Common myeloid progenitor, CD34-positive (primary cell): ENCODE measurements at regions of chr3 and their contacts with region 1.

Region 1: GRCh38 chr3:49570028-49570654 is 15.9 kb downstream of the BSN start:
- DNase-seq: no peak
- H3K4me3 ChIP-seq: no peak overlapping the region
- H3K27ac ChIP-seq: no peak overlapping the region
- H3K4me1 ChIP-seq: no peaks in the 10 kb centered on the region
- H3K27me3 ChIP-seq: peaks cover 0 to 2% (median 0%) of the 10 kb centered on the region in 5 experiments

Region 2: GRCh38 chr3:49351521-49352011 is 218.6 kb before region 1 on chr3:
- CTCF ChIA-PET with region 1: no interaction called
- POLR2A ChIA-PET with region 1: no interaction called
- DNase-seq: peak in 2 of 3 donors; percentile 69 to 79
- H3K4me3 ChIP-seq: peak overlapping the region in 2 of 7 experiments; percentile 3 to 33
- H3K27ac ChIP-seq: peak overlapping the region; percentile 37 to 75
- H3K4me1 ChIP-seq: peaks cover 25 to 67% (median 64%) of the 10 kb centered on the region in 4 experiments
- H3K27me3 ChIP-seq: no peaks in the 10 kb centered on the region

Region 3: DNA sequence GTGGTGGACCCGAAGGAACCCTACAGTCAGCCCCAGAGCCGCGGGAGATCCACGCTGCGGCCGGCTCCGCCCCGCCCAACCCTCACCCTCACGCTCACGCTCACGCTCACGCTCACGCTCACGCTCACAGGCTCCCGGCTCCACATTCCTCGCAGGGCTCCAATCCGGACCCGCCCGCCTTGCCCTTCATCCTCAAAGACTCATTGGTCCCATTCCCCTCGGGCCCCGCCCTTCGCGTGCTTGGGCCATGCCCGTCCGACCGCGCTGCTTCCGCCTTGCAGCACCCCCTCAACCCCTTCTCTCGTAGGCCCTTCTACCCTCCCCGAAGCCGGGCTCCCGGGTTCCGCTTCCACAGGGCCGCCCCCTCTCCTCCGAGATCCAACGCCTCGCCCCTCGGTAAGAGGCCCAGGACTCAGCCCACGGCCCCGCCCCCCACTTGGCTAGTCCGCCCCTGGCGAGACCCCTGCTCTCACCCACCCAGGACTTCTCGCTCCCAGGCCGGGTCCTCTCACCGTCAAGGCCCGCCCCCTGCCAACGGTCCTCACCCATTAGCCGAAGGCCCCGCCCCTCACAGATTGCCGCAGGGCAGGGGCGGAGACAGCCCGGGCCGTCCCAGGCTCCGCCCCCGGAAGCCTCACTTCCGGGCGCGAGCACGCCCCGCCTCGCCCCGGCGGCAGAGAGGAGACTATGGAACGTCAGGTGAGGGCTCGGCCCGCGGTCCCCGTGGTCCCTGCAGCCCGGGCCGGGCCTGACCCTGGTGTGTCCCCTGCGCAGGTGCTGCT is 103.8 kb after region 1 on chr3 and contains the start of gene APEH:
- CTCF ChIA-PET with region 1: interaction called, 10 read pairs
- POLR2A ChIA-PET with region 1: interaction called, 6 read pairs
- DNase-seq: peak; percentile 98 to 99 (median 98)
- H3K4me3 ChIP-seq: peak within 1 kb of the TSS; percentile 42 to 89 (median 81)
- H3K27ac ChIP-seq: peak within 1 kb of the TSS; percentile 82 to 92
- H3K4me1 ChIP-seq: peaks cover 0 to 25% (median 23%) of the 10 kb centered on the region in 4 experiments
- H3K27me3 ChIP-seq: no peaks in the 10 kb centered on the region